CD8-positive, alpha-beta T cell (primary cell): ENCODE measurements at regions of chr4 and their contacts with region 1.

Region 1: GRCh38 chr4:52659001-52659721 is at the start of gene USP46:
- DNase-seq: peak in 8 of 9 experiments; percentile 25 to 70 (median 42)
- ATAC-seq: peak; percentile 77
- H3K4me3 ChIP-seq: peak within 1 kb of the TSS; percentile 66 to 67
- H3K4me3 Mint-ChIP-seq: peak within 1 kb of the TSS; percentile 82
- H3K27ac ChIP-seq: peak within 1 kb of the TSS in 1 of 2 experiments; percentile 22
- H3K27ac Mint-ChIP-seq: peak within 1 kb of the TSS; percentile 76
- H3K4me1 ChIP-seq: no peaks in the 10 kb centered on the region
- H3K4me1 Mint-ChIP-seq: peaks cover 21% of the 10 kb centered on the region
- H3K27me3 ChIP-seq: no peaks in the 10 kb centered on the region
- H3K27me3 Mint-ChIP-seq: peaks cover 31% of the 10 kb centered on the region
- CTCF ChIP-seq: no peak
- total RNA-seq, gene USP46: 3.1 to 4.5 TPM

Region 2: DNA sequence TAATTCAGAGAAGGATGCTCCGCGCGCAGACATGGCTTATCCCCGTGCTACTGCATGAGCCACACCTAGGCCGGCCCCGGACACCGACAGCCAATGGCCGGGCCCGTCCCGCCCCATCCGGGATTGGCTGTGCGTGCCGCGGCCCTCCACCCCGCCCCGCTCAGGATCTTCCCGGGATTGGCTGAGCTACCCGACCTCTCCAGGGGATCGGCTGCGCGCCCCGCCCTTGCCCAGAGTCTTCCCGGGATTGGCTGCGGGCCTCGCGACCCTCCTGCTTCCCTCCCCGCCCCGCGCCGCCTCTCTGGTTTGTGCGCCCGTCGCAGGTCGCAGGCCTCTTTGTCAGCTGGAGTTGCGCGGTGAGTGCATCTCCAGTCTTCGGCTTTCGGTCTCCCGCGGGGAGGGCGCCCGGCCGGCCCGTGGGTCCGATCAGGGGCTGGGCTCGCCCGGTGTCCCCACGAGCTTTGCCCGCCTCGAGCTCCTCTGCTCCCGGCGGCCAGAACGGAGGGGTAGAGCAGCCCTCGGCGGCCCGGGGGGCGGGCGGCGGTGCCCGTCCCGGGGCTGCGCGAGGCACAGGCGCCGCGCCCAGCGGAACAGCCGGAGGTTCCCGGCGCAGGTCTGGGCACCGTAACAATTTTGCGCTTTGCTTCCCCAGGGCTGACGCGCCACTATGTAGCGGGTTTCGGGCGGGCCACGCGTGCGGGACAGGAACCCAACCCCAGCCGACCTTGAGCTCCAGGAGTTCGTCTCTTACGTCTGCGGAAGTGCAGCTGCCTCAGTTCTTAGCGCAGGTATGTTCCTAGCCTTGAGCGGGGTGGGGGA is 53.2 kb after region 1 on chr4:
- CTCF ChIA-PET with region 1: no interaction called
- POLR2A ChIA-PET with region 1: interaction called, 12 read pairs
- intact Hi-C with region 1: loop called (anchors 1 to 5 kb)
- DNase-seq: peak; percentile 90 to 97 (median 95)
- ATAC-seq: peak; percentile 89
- H3K4me3 ChIP-seq: peak overlapping the region; percentile 58 to 76
- H3K4me3 Mint-ChIP-seq: peak overlapping the region; percentile 92
- H3K27ac ChIP-seq: peak overlapping the region; percentile 82 to 89
- H3K27ac Mint-ChIP-seq: peak overlapping the region; percentile 96
- H3K4me1 ChIP-seq: peaks cover 29% of the 10 kb centered on the region
- H3K4me1 Mint-ChIP-seq: peaks cover 43% of the 10 kb centered on the region
- H3K27me3 ChIP-seq: no peaks in the 10 kb centered on the region
- H3K27me3 Mint-ChIP-seq: no peaks in the 10 kb centered on the region
- CTCF ChIP-seq: no peak

Region 3: DNA sequence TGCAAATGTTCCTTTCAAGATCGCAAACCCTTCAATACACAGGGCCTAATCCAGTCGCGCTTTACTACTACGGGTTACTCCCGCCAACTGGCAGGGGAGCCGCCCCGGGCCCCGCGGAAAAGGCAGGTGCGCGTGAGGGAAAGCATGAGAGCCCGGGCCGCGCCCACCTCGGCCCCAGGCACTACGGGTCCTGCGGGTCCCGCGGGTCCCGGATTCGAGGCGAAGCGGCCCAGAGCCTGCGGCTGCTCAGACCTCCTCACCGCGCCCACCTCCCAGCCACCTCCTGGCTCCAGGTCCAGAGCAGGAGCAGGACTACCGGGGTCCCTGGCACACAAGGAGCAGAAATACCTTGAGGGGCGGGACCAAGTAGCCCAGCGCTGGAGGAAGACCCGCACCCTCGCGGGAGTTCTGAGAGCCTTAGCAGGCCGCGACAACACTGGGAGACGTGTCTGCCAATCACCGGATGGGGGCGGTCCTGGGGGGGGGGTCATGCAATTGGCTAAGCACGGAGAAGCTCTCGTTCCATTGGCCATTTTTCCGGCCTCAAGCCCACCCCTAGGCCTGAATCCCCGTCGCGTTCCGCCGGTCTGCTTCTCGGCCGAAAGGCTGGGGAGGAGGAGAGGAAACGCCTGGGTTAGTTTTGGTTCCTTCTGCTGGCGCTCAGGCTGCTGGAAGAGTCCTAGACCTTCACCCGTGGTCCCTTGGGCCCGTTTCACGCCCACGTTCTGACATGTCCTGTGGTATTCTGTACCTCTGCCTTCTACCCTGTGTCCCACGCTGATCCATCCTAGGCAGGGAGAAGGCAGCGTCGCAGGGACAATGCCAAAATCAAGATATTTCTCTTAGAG is 63.0 kb after region 1 on chr4:
- CTCF ChIA-PET with region 1: no interaction called
- POLR2A ChIA-PET with region 1: no interaction called
- intact Hi-C with region 1: loop called in 1 of 2 experiments (anchors 2 kb)
- DNase-seq: peak; percentile 74 to 97 (median 89)
- ATAC-seq: peak; percentile 97
- H3K4me3 ChIP-seq: peak overlapping the region; percentile 76 to 87
- H3K4me3 Mint-ChIP-seq: peak overlapping the region; percentile 85
- H3K27ac ChIP-seq: peak overlapping the region; percentile 67 to 90
- H3K27ac Mint-ChIP-seq: peak overlapping the region; percentile 90
- H3K4me1 ChIP-seq: peaks cover 9% of the 10 kb centered on the region
- H3K4me1 Mint-ChIP-seq: peaks cover 11% of the 10 kb centered on the region
- H3K27me3 ChIP-seq: no peaks in the 10 kb centered on the region
- H3K27me3 Mint-ChIP-seq: peaks cover 5% of the 10 kb centered on the region
- CTCF ChIP-seq: no peak